ENCODE measurements at regions of chr12 and their contacts with region 1.

Region 1: DNA sequence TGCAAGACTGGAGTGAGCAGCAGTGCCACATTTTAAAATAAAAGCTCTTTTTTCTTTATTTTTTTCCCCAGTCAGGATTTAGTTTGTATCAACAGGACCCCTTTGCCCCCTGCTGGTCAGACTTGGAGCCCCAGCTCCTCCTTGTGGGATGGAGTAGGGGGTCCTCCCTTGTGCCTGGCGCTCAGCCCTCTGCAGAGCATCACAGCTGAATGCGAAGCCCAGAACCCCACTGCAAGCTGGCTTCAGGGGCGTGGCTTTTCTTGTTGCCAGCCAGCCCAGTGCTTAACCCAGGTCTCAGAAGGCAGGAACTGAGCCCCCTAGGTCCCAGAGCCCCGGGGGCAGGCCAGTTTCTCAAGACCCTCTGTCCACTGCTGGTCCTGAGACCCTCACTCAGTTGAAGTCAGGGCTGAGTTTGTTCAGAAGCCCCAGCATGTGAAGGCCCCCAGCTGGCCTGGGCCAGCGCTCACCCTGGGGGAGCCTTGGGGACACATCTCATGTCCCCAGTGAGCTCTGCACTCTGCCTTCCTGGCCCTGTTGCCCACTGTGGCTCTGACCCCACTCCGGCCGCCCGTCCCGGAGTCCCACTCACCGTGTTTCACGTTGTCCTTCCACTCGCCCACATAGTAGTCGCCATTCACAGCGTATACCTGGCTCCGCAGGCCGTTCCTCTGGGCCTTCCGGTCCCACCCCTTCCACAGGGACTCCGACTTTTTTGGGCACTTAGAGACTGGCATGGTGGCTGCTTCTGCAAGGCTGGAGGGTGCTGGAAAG is 519 bp downstream of the MORN3 start:
- DNase-seq: peak; percentile 81
- ATAC-seq: no peak
- H3K4me3 Mint-ChIP-seq: no peak overlapping the region
- H3K27ac Mint-ChIP-seq: peak overlapping the region; percentile 2
- H3K4me1 Mint-ChIP-seq: peaks cover 48% of the 10 kb centered on the region
- H3K27me3 Mint-ChIP-seq: no peaks in the 10 kb centered on the region
- CTCF ChIP-seq: peak; percentile 80

Region 2: GRCh38 chr12:121296618-121297434 is 372.1 kb before region 1 on chr12 and contains the start of gene CAMKK2:
- CTCF ChIA-PET with region 1: no interaction called
- POLR2A ChIA-PET with region 1: no interaction called
- intact Hi-C with region 1: no loop called
- DNase-seq: peak; percentile 85
- ATAC-seq: peak; percentile 85
- H3K4me3 Mint-ChIP-seq: peak within 1 kb of the TSS; percentile 91
- H3K27ac Mint-ChIP-seq: peak within 1 kb of the TSS; percentile 81
- H3K4me1 Mint-ChIP-seq: peaks cover 22% of the 10 kb centered on the region
- H3K27me3 Mint-ChIP-seq: no peaks in the 10 kb centered on the region
- CTCF ChIP-seq: peak; percentile 28
- total RNA-seq, gene CAMKK2: 25.2 to 28.0 TPM

Region 3: DNA sequence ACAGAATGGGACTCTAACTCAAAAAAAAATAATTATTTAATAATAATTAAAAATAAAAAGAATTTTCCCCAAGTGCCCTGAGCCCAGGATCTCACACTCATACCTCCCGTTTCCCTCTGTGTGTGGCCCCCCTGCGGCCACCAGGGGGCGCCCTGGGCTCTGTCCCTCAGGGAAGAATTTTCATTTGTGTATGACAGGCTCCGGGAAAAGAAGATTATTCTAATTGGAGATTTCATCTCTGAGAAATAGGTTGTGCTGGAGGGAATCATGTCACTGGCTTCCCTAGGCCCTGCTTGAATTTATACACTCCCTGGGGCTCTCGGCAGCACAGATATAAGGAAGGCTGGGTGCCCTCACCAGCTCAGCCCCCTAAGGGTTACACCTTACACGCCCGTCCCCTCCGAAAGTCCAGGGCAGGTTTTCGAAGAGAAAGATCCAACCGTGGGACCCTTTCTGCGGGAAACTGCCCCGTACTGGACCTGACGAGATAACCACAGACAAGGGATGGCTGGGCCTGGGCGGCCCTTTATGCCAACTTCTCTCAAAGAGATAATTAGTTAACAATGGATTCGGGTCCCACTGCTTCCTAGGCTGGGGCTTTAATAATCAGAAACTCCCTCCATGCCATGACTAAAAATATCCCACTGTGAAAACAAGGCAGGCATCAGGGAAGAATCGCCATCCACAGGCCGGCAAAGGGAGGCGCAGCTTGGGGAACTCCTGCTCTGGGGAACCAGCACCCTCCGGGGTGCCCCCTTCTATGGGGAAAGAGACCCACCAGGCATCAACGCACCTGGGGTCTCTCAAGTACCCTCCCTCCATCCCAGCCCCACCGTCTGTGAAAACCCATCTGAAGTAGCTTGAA is 168.8 kb before region 1 on chr12:
- CTCF ChIA-PET with region 1: interaction called, 11 read pairs
- POLR2A ChIA-PET with region 1: interaction called, 3 read pairs
- intact Hi-C with region 1: no loop called
- DNase-seq: peak; percentile 80
- ATAC-seq: peak; percentile 78
- H3K4me3 Mint-ChIP-seq: no peak overlapping the region
- H3K27ac Mint-ChIP-seq: no peak overlapping the region
- H3K4me1 Mint-ChIP-seq: peaks cover 17% of the 10 kb centered on the region
- H3K27me3 Mint-ChIP-seq: no peaks in the 10 kb centered on the region
- CTCF ChIP-seq: peak; percentile 99

Region 4: GRCh38 chr12:121637231-121637914 is 31.6 kb before region 1 on chr12:
- CTCF ChIA-PET with region 1: interaction called, 22 read pairs
- POLR2A ChIA-PET with region 1: interaction called, 9 read pairs
- intact Hi-C with region 1: no loop called
- DNase-seq: peak; percentile 89
- ATAC-seq: peak; percentile 91
- H3K4me3 Mint-ChIP-seq: peak overlapping the region; percentile 60
- H3K27ac Mint-ChIP-seq: peak overlapping the region; percentile 95
- H3K4me1 Mint-ChIP-seq: peaks cover 48% of the 10 kb centered on the region
- H3K27me3 Mint-ChIP-seq: no peaks in the 10 kb centered on the region
- CTCF ChIP-seq: no peak

Region 5: GRCh38 chr12:121678716-121679580 is 10.0 kb after region 1 on chr12:
- CTCF ChIA-PET with region 1: interaction called, 11 read pairs
- POLR2A ChIA-PET with region 1: interaction called, 5 read pairs
- intact Hi-C with region 1: no loop called
- DNase-seq: peak; percentile 30
- ATAC-seq: peak; percentile 34
- H3K4me3 Mint-ChIP-seq: no peak overlapping the region
- H3K27ac Mint-ChIP-seq: peak overlapping the region; percentile 56
- H3K4me1 Mint-ChIP-seq: peaks cover 9% of the 10 kb centered on the region
- H3K27me3 Mint-ChIP-seq: no peaks in the 10 kb centered on the region
- CTCF ChIP-seq: no peak